OCI-LY7 (cell line): ENCODE measurements at regions of chr17 and their contacts with region 1.

Region 1: GRCh38 chr17:58417300-58418092 is at the start of gene RNF43:
- DNase-seq: peak; percentile 89
- H3K4me3 ChIP-seq: peak within 1 kb of the TSS; percentile 8
- H3K27ac ChIP-seq: no peak within 1 kb of the TSS
- H3K4me1 ChIP-seq: peaks cover 18% of the 10 kb centered on the region
- CTCF ChIP-seq: peak; percentile 87
- total RNA-seq, gene RNF43: 0.19 and 0.39 TPM in 2 replicates

Region 2: GRCh38 chr17:58317421-58318064 is 100.0 kb before region 1 on chr17:
- CTCF ChIA-PET with region 1: interaction called, 4 read pairs
- POLR2A ChIA-PET with region 1: interaction called, 17 read pairs
- intact Hi-C with region 1: no loop called
- DNase-seq: peak; percentile 89
- H3K4me3 ChIP-seq: no peak overlapping the region
- H3K27ac ChIP-seq: peak overlapping the region; percentile 48
- H3K4me1 ChIP-seq: peaks cover 15% of the 10 kb centered on the region
- CTCF ChIP-seq: peak; percentile 90

Region 3: DNA sequence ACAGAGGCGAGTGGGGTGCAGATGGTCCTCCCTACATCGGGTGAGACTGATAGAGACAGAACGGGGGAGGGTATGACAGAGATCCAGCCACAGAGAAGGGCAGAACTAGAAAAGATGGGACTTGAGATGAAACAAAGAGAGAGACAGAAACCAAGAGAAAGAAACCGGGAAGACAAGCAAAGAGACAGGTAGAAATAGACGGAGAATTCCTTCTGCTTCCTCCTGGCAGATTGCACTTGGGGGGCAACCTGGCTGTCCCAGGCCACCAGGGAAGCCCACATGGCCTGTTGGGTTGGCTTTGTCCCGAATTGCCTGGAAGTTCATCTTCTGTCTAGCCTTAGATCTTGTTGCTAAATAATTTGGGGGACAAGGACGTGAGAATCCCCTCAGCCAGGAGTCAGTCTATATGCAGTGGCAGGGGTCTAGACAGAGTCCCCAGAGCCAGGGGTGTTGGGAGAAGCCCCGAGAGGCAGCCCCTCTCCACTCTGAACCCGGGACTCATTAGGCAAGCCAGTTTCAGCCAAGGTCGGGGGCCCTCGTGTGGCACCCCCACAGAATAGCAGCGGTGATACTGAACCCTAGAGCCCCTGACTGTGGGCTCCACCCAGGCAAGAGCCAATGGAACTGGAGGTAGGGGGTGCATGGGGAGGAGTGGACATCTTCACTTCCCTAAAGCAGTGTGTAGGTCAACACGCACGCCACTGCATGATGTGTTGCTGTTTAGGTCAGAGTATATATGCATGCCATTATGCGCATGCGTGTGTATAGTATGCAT is 88.3 kb before region 1 on chr17:
- CTCF ChIA-PET with region 1: interaction called, 4 read pairs
- POLR2A ChIA-PET with region 1: interaction called, 4 read pairs
- intact Hi-C with region 1: loop called (anchors 2 kb)
- DNase-seq: peak; percentile 92
- H3K4me3 ChIP-seq: peak overlapping the region; percentile 98
- H3K27ac ChIP-seq: peak overlapping the region; percentile 99
- H3K4me1 ChIP-seq: peaks cover 55% of the 10 kb centered on the region
- CTCF ChIP-seq: peak; percentile 78

Region 4: GRCh38 chr17:58369214-58370031 is 48.1 kb before region 1 on chr17:
- CTCF ChIA-PET with region 1: interaction called, 3 read pairs
- POLR2A ChIA-PET with region 1: interaction called, 6 read pairs
- intact Hi-C with region 1: loop called (anchors 5 kb)
- DNase-seq: no peak
- H3K4me3 ChIP-seq: no peak overlapping the region
- H3K27ac ChIP-seq: no peak overlapping the region
- H3K4me1 ChIP-seq: peaks cover 45% of the 10 kb centered on the region
- CTCF ChIP-seq: no peak